HepG2 (cell line): ENCODE measurements at regions of chr2 and their contacts with region 1.

Region 1: DNA sequence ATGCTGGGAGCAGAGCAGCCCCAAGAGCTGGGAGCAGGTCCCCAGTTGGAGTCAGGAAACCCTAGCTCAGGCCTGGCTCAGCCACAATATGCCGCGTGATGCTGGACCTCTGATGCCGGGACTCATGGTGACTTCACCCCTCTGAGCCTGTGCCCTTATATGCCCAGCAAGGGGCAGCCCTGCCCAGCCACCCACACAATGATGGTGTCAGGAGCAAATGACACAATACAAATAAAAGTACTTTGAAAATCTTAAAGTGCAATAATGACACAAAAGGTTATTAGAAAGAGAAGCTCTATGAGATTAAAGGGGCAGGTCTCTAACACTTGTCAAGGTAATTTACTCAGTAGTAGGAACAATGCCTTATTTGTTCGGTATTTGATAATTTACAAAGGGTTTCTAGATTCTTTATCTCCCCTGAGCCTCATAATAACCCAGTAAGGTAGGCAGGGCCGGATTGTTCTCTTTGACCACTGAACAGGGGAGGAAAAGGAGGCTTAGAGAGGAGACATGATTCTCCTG is 18.3 kb upstream of the KIF3C start:
- DNase-seq: peak; percentile 79
- ATAC-seq: peak; percentile 65
- H3K4me3 ChIP-seq: no peak overlapping the region
- H3K27ac ChIP-seq: no peak overlapping the region
- H3K4me1 ChIP-seq: peaks cover 60% of the 10 kb centered on the region
- H3K27me3 ChIP-seq: peaks cover 0 to 8% of the 10 kb centered on the region in 2 experiments; a peak in 3 of 5 replicates
- CTCF ChIP-seq: no peak
- EP300 ChIP-seq: no peak
- POLR2A ChIP-seq: peak in 1 of 2 experiments; percentile 33; a peak in 1 of 4 replicates
- RAD21 ChIP-seq: no peak; the same call in 1 of the 2 replicates

Region 2: GRCh38 chr2:26011990-26012856 is 11.6 kb after region 1 on chr2:
- CTCF ChIA-PET with region 1: interaction called, 3 read pairs
- POLR2A ChIA-PET with region 1: interaction called, 15 read pairs
- in situ Hi-C with region 1: no loop called
- intact Hi-C with region 1: loop called (anchors 1 kb)
- DNase-seq: peak; percentile 94
- ATAC-seq: peak; percentile 88
- H3K4me3 ChIP-seq: peak overlapping the region in 2 of 3 experiments; percentile 5 to 41; a peak in 2 of 6 replicates
- H3K27ac ChIP-seq: peak overlapping the region; percentile 0
- H3K4me1 ChIP-seq: peaks cover 38% of the 10 kb centered on the region
- H3K27me3 ChIP-seq: peaks cover 2 to 11% of the 10 kb centered on the region in 2 experiments; a peak in 1 of 5 replicates
- CTCF ChIP-seq: no peak
- EP300 ChIP-seq: peak in 1 of 2 experiments; percentile 66; a peak in 3 of 4 replicates
- POLR2A ChIP-seq: no peak
- RAD21 ChIP-seq: no peak

Region 3: GRCh38 chr2:26244309-26245121 is 243.9 kb after region 1 on chr2 and contains the starts of genes HADHA and HADHB:
- CTCF ChIA-PET with region 1: no interaction called
- POLR2A ChIA-PET with region 1: no interaction called
- in situ Hi-C with region 1: no loop called
- intact Hi-C with region 1: no loop called
- DNase-seq: peak; percentile 95
- ATAC-seq: peak; percentile 94
- H3K4me3 ChIP-seq: peak within 1 kb of the TSS; percentile 62 to 96 (median 94)
- H3K27ac ChIP-seq: peak within 1 kb of the TSS; percentile 91
- H3K4me1 ChIP-seq: peaks cover 59% of the 10 kb centered on the region
- H3K27me3 ChIP-seq: peaks cover 0 to 7% of the 10 kb centered on the region in 2 experiments; a peak in 2 of 5 replicates
- CTCF ChIP-seq: peak; percentile 57
- EP300 ChIP-seq: peak; percentile 49 to 52
- POLR2A ChIP-seq: peak; percentile 94 to 98
- RAD21 ChIP-seq: peak; percentile 14; the same call in 1 of the 2 replicates
- total RNA-seq, gene HADHA: 270 and 385 TPM in 2 replicates
- total RNA-seq, gene HADHB: 238 and 304 TPM in 2 replicates